ENCODE measurements at regions of chr11 and their contacts with region 1.

Region 1: DNA sequence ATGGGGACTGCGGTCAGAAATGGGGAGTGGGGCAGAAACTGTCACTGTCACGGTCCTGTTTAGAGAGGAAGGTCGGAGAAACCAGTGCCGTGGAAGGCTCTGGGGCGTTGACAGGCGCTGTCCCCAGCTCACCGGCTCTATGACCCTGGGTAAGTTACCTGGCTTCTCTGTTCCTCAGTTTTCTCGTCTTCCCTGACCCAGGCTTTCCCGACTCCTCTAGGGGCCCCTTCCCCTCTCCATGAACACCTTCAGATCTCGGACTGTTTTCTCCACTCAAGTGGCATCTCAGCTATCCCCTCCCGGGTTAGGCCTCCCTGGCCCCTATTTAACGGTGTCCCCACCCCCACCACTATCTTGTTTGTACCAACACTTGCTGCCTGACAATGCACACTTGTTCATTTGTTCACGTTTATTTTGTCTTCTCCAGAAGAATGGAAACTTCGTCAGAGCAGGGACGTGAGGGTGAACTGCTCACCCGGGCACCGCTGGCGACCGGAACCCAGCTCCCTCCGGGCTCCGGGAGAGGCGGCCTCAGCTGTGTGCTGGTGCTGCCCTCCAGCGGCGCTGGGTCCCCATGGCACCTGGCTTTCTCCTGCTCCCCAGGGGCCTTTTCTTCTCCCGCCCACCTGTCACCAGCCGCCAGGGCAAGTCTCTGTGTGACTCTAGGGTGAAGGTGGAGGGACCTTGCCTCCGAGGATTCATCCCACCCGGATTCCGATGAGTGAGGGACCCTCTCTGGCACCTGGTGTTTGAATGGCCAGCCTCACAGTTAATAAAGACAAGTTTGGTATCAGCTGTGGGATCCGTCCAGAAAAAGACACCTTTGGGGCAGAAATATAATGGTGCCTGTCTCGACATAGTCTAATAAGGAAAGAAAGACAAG is 33.1 kb upstream of the SLC35C1 start:
- DNase-seq: peak; percentile 95
- H3K4me3 ChIP-seq: peak overlapping the region; percentile 45 to 69
- H3K27ac ChIP-seq: no peak overlapping the region
- H3K4me1 ChIP-seq: peaks cover 0 to 7% of the 10 kb centered on the region in 2 experiments; a peak in 2 of 4 replicates
- H3K27me3 ChIP-seq: peaks cover 17% of the 10 kb centered on the region; the same call in 1 of the 2 replicates
- CTCF ChIP-seq: peak; percentile 91
- EP300 ChIP-seq: no peak
- RAD21 ChIP-seq: peak; percentile 95

Region 2: DNA sequence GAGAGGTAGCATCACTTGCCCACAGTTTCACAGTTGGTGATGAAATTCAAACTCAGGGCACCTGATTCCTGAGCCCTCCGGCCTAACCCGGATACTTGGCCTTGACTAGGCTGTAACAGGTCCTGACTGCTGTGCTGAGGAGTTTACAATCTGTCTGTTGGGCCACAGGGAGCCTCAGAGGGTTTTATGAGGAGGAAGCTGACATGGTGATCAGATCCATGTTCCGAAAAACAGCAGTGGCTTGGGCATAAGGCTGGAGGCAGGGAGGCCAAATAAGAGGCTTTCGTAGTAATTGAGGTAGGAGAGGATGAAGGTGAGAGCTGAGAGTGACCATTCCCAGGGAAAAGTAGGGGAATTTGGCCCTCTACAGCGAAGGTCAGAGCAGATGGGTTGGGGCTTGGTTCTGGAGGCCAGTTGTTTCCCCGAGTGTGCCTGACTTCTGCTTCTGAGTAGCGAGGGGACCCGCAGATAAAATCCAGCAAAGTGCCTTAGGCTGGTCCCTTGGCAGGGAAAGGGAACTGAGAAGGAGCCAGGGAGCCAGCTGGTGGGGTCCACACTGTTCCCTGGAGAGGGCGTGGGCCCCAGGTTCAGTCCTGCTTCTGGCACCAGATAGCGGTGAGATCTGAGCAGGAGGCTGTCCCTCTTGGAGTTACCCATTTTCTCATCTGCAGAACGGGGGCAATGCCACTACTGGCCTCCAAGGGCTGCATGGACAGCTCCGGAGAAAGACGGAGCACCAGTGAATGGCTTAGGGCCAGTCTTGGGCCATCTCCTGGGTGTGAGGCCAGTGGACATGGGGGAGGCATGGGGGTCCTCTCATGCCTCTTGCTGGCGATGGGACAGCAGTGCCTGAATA is 618.8 kb before region 1 on chr11:
- CTCF ChIA-PET with region 1: no interaction called
- POLR2A ChIA-PET with region 1: no interaction called
- DNase-seq: no peak
- H3K4me3 ChIP-seq: no peak overlapping the region
- H3K27ac ChIP-seq: no peak overlapping the region
- H3K4me1 ChIP-seq: peaks cover 4 to 26% of the 10 kb centered on the region in 2 experiments; a peak in 1 of 4 replicates
- H3K27me3 ChIP-seq: no peaks in the 10 kb centered on the region
- CTCF ChIP-seq: no peak
- EP300 ChIP-seq: no peak
- RAD21 ChIP-seq: no peak

Region 3: DNA sequence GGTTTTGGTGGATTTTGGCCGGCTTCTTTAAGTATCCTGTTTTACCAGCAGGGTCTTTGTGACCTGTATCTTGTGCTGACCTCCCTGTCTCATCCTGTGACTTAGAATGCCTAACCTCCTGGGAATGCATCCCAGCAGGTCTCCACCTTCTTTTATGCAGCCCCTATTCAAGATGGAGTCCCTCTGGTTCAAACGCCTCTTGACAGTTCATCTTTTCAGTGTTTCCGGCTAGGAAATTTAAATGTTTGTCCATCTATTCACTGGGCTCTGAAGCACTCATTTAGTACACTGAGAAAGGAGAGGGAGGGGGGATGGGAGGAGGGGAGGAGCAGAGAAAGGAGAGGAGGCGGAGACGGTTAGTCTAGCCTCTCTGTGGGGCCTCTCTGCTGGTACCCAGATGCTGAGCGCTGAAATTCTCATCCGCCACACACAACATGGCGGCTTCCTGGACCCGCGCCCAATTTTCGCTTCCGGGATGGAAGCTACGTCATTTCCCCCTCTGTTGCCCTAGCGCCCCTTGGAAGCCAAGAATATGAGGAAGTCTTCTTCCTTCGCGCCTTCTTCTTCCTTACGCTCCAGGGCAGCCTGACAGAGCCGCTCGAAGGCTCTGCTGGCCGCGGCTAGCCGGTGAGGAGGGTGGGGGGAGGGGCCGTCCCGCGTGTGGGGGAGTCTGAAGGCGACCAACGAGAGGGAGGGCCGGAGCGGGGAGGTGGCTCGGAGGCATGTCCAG is 416.7 kb before region 1 on chr11:
- CTCF ChIA-PET with region 1: interaction called, 46 read pairs
- POLR2A ChIA-PET with region 1: no interaction called
- DNase-seq: peak; percentile 88
- H3K4me3 ChIP-seq: peak overlapping the region; percentile 66 to 67
- H3K27ac ChIP-seq: peak overlapping the region in 1 of 2 experiments; percentile 64; a peak in 1 of 4 replicates
- H3K4me1 ChIP-seq: peaks cover 0 to 4% of the 10 kb centered on the region in 2 experiments; a peak in 2 of 4 replicates
- H3K27me3 ChIP-seq: no peaks in the 10 kb centered on the region
- CTCF ChIP-seq: no peak
- EP300 ChIP-seq: no peak
- RAD21 ChIP-seq: no peak

Region 4: DNA sequence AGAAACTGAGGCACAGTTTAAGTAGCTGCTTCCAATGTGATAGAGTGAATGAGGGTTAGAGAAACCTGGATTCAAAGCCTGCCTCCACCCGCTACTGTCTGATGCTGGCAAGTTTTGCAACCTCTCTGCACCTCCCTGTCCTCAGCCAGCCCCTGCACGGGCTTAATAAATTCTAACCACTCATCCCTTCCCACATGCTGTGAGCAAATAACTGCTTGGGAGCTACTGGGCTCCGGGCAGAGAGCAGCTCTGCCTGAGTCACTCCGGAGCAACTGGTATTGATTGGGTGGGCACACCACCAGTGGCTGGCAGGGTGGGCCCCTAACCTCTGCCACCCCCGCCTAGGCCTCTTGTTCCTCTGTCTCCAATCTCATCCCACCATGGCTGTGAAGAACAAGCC is 381.4 kb before region 1 on chr11:
- CTCF ChIA-PET with region 1: interaction called, 21 read pairs
- POLR2A ChIA-PET with region 1: no interaction called
- DNase-seq: no peak
- H3K4me3 ChIP-seq: no peak overlapping the region
- H3K27ac ChIP-seq: no peak overlapping the region
- H3K4me1 ChIP-seq: peaks cover 8% of the 10 kb centered on the region in 2 experiments; a peak in 1 of 4 replicates
- H3K27me3 ChIP-seq: no peaks in the 10 kb centered on the region
- CTCF ChIP-seq: no peak
- EP300 ChIP-seq: no peak
- RAD21 ChIP-seq: no peak

Region 5: GRCh38 chr11:45655347-45655756 is 116.5 kb before region 1 on chr11:
- CTCF ChIA-PET with region 1: interaction called, 87 read pairs
- POLR2A ChIA-PET with region 1: no interaction called
- DNase-seq: peak; percentile 93
- H3K4me3 ChIP-seq: peak overlapping the region in 1 of 2 experiments; percentile 40; a peak in 1 of 4 replicates
- H3K27ac ChIP-seq: no peak overlapping the region
- H3K4me1 ChIP-seq: peaks cover 19 to 26% of the 10 kb centered on the region in 2 experiments; a peak in 3 of 4 replicates
- H3K27me3 ChIP-seq: no peaks in the 10 kb centered on the region
- CTCF ChIP-seq: peak; percentile 90
- EP300 ChIP-seq: no peak
- RAD21 ChIP-seq: peak; percentile 84

Region 6: DNA sequence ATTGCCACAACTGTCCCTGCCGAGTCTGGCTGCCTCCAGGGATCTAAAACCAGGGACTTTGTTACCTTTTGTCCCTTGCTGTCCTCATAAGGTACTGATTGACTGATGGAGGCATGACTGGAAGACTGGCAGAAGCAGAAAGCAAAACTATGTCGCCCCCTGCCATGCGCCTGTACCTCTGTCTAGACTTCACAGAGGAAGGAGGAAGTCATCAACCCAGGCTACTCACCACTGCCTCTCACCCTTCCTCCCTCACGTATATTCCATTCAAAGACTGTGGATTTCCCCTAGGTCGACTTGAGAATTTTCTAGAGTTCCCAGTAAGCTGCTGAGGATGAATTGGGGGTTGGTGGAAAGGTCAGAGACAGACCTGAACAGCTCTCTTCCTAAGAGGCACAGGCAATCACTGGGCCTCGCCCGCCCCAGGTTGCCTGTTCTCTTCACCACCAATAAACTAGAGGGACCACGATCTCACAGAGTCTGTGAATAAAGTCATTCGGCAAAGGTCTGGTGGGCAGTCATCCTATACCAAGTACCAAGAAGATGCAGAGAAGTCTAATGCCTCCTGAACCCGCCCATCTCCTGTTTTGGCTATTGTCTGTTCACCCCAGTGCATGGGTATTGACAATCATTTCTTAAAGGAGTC is 78.9 kb before region 1 on chr11:
- CTCF ChIA-PET with region 1: interaction called, 11 read pairs
- POLR2A ChIA-PET with region 1: no interaction called
- DNase-seq: no peak
- H3K4me3 ChIP-seq: no peak overlapping the region
- H3K27ac ChIP-seq: no peak overlapping the region
- H3K4me1 ChIP-seq: peaks cover 0 to 13% of the 10 kb centered on the region in 2 experiments; a peak in 2 of 4 replicates
- H3K27me3 ChIP-seq: peaks cover 13% of the 10 kb centered on the region; the same call in 1 of the 2 replicates
- CTCF ChIP-seq: no peak
- EP300 ChIP-seq: no peak
- RAD21 ChIP-seq: no peak

Region 7: DNA sequence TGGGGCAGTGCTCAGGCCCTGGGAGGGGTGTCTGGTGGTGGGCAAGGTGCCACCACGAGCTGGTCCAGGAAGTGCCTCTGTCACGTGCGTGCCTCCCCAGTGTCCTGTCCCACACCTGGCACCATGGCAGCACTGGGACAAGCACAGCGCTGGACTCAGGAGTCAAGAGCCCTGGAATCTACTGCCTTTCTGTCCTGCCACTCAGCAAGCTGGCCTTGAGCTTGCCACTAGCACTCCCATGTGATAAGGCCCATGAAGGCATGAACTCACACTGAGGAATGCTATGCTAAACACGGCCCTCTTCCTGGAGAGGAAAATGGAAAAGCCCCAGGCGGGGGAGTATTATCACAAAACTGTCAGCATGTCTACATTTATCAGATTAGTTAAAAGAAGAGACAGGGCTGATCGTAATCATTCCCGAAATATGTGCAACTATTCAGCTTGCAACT is 17.5 kb before region 1 on chr11:
- CTCF ChIA-PET with region 1: interaction called, 121 read pairs
- POLR2A ChIA-PET with region 1: no interaction called
- DNase-seq: peak; percentile 39
- H3K4me3 ChIP-seq: no peak overlapping the region
- H3K27ac ChIP-seq: no peak overlapping the region
- H3K4me1 ChIP-seq: peaks cover 0 to 14% of the 10 kb centered on the region in 2 experiments; a peak in 2 of 4 replicates
- H3K27me3 ChIP-seq: no peaks in the 10 kb centered on the region; the same call in 1 of the 2 replicates
- CTCF ChIP-seq: no peak
- EP300 ChIP-seq: no peak
- RAD21 ChIP-seq: no peak

Region 8: DNA sequence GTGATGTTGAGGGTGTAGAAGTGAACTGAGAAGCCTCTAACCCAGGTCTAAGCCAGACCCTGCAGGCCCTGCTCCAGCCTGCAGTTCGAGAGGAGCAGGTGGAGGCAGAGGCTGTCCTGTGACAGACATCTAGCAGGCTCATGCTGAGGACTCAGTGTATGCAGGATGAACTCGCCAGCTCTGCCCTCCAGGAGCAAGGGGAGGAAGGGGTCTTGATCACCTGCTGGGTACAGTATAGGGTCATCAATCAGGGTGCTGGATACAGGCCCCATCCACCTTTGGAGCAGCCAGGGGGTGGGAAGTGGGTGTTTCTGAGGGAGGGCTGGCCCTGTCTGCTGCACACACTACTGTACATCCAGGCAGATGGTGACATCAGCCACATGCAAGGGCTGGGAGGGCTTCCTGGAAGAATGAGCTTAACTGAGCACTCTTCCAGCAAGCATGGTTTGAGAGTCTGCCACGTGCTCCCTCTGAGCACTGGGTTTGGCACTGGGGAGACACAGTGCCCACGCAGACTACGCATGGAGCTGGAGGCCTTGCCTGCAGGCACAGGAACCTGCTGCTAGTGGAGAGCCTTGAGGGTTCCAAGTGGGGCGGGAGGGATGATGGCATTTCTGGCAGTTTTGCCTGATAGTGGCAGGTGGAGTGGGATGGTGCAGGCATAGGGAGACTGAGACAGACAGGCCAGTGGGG is 122.9 kb after region 1 on chr11:
- CTCF ChIA-PET with region 1: no interaction called
- POLR2A ChIA-PET with region 1: no interaction called
- DNase-seq: peak; percentile 14
- H3K4me3 ChIP-seq: no peak overlapping the region
- H3K27ac ChIP-seq: no peak overlapping the region; a peak in 1 of 4 replicates
- H3K4me1 ChIP-seq: peaks cover 6 to 32% of the 10 kb centered on the region in 2 experiments; a peak in 2 of 4 replicates
- H3K27me3 ChIP-seq: no peaks in the 10 kb centered on the region
- CTCF ChIP-seq: no peak
- EP300 ChIP-seq: no peak
- RAD21 ChIP-seq: no peak